Psoas muscle (tissue), 8 donors: ENCODE measurements at regions of chr14 and their contacts with region 1.

Region 1: GRCh38 chr14:57268161-57269069 is at the starts of genes AP5M1 and EXOC5:
- DNase-seq: peak; percentile 92 to 95
- ATAC-seq: peak; percentile 94 to 96 (median 96)
- H3K4me3 ChIP-seq: peak within 1 kb of the TSS; percentile 92
- H3K27ac ChIP-seq: peak within 1 kb of the TSS; percentile 96
- H3K4me1 ChIP-seq: peaks cover 40% of the 10 kb centered on the region
- H3K27me3 ChIP-seq: no peaks in the 10 kb centered on the region
- CTCF ChIP-seq: no peak
- total RNA-seq, gene AP5M1: 27.1 to 64.0 (median 32.2) TPM
- total RNA-seq, gene EXOC5: 35.4 to 59.7 (median 51.4) TPM

Region 2: GRCh38 chr14:56963381-56963780 is 305.0 kb before region 1 on chr14:
- intact Hi-C with region 1: no loop called
- DNase-seq: no peak
- ATAC-seq: peak in 2 of 4 donors; percentile 37 to 47
- H3K4me3 ChIP-seq: no peak overlapping the region
- H3K27ac ChIP-seq: no peak overlapping the region
- H3K4me1 ChIP-seq: no peaks in the 10 kb centered on the region
- H3K27me3 ChIP-seq: no peaks in the 10 kb centered on the region
- CTCF ChIP-seq: no peak

Region 3: DNA sequence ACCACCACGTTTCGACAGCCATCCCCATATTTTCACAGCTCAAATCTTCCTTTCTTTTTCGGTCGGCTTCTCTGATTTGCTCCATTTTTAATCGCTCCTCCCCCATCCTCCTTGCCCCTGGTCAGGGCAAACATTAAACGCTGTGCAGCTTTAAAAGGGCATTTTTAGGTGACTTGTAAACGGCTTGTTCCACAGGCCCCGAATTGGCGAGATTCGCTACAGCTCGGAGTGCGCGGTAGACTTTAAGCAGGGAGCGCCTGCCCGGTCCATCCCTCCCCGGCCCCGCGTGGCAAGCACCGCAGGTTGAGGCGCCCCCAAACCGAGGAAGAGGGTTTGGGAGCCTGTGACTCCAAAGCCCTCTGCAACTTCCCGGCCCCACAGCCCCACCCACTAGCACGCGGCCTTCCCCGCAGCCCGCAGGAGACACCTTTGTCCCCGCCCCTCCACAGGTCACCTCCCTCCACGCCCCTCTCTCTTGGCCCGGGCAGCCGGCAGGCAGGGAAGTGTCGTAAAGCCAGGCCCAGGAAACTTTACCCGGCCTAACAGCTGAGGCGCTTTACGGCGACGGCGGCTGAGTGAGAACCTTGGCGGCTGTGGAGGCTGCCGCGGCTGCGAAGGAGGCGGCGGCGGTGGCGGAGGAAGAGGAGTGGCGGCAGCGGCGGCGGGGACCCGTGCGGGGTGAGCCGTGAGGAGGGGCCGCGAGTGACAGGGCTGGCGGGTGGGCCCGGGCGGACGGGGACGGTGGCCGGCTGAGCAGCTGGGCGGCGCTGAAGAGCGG is 121.8 kb after region 1 on chr14 and contains the start of gene NAA30:
- intact Hi-C with region 1: loop called in 1 of 2 experiments (anchors 10 kb)
- DNase-seq: peak; percentile 93 to 96
- ATAC-seq: peak; percentile 93 to 96 (median 96)
- H3K4me3 ChIP-seq: peak within 1 kb of the TSS; percentile 86
- H3K27ac ChIP-seq: peak within 1 kb of the TSS; percentile 87
- H3K4me1 ChIP-seq: peaks cover 36% of the 10 kb centered on the region
- H3K27me3 ChIP-seq: no peaks in the 10 kb centered on the region
- CTCF ChIP-seq: no peak
- total RNA-seq, gene NAA30: 33.0 to 47.7 (median 41.3) TPM